Posterior vena cava (tissue), 2 donors: ENCODE measurements at regions of chr20 and their contacts with region 1.

Region 1: GRCh38 chr20:14566505-14566904 is 229.1 kb upstream of the FLRT3 start:
- DNase-seq: no peak

Region 2: GRCh38 chr20:14441201-14441600 is 125.3 kb before region 1 on chr20:
- intact Hi-C with region 1: loop called in 1 of 2 experiments (anchors 5 kb)
- DNase-seq: no peak

Region 3: DNA sequence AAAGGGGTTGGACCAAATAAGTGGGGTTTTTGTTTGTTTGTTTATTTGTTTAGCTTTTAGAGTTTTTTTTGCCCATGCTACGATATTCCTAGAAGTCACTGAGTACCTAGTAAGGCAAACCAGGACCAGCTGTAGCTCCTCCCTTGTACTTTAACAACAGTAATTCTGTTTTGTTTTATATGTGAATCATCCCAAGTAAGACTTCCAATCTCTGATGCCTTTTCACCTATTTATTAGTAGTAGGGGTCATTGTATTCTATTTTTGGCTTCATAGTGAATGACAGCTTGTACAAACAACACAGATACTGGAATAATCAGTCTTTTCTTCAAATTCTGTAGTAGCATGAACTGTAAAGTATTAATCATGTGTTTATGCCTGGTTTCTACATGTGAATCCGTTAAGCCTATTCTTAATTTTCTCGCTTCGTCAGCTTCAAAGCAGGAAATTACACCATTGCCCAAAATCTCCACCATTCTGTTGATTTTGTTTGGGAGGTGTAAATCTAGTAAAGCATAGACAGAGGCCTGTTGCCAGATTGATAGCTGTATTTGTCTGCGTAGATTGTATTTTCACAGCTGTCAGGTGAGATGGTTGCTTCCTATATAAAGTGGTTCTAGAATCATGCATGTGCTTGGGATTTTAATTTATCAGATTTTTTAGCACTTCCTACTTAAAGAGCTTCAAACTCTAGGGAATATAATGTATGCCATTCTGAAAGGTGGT is 77.6 kb before region 1 on chr20:
- intact Hi-C with region 1: no loop called
- DNase-seq: no peak

Region 4: DNA sequence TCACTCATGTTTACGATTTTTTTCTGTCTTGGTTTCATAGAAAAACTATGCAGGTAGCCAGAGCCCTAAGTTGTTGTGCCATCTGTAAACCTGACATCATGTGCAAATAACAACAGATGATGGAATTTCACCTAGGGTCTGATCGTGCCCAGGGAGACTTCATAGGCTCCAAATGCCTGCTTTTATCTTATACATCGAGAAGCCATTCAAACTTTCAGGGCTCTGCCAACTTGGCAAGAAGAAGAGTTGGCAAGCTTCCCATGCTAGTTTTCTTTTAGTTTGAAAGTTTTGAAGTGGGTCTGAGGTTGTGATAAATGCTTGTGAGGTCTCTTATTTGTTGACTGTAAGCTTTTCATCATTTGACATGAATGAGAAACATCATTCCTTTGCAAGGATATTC is 53.7 kb before region 1 on chr20:
- intact Hi-C with region 1: no loop called
- DNase-seq: no peak

Region 5: DNA sequence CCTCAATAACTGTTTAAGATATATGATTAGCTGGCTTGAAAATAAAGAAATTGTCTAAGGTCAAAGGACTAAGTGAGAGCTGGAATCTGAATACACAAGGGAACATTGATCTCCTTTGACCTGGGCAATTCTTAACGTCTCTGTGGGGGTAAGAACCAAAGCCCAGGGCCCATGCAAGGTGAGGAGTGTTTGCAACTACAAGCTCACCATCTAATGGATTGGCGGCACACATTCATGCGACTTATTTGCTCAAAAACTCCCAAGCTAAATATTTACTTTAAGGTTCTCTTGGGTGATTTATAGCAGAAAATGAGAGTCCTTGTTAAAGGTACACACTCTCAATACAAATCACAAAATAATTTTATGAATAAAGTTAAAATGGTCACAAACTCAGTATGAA is 162.9 kb after region 1 on chr20:
- intact Hi-C with region 1: no loop called
- DNase-seq: no peak

Region 6: DNA sequence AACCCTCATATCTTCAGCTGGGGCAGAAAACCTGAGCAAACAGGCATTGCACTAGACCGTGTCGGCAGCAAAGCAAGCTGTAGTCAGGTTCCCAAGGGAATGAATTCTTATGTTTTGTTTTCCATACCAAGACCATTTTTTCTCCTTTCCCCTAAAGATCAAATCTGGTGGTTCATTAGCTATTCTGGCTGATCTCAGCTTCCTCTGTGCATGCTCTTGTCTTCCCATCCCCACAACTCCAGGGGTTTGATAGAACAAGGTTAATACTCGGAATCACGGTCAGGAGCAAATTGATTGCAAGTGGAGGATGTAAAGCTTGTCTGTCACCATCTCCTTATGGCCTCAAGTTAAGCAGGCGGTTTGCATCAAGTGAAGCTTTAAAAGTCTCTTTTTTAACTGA is 1227.9 kb after region 1 on chr20:
- intact Hi-C with region 1: loop called in 1 of 2 experiments (anchors 5 kb)
- DNase-seq: no peak